SK-N-SH (cell line): ENCODE measurements at regions of chr14 and their contacts with region 1.

Region 1: GRCh38 chr14:94036313-94037050 is 10.3 kb downstream of the OTUB2 start:
- DNase-seq: peak; percentile 80
- H3K4me3 ChIP-seq: no peak overlapping the region
- H3K27ac ChIP-seq: no peak overlapping the region
- H3K4me1 ChIP-seq: peaks cover 0 to 14% of the 10 kb centered on the region in 2 experiments; a peak in 1 of 4 replicates
- H3K27me3 ChIP-seq: no peaks in the 10 kb centered on the region
- CTCF ChIP-seq: peak; percentile 78
- EP300 ChIP-seq: no peak
- RAD21 ChIP-seq: peak; percentile 74

Region 2: DNA sequence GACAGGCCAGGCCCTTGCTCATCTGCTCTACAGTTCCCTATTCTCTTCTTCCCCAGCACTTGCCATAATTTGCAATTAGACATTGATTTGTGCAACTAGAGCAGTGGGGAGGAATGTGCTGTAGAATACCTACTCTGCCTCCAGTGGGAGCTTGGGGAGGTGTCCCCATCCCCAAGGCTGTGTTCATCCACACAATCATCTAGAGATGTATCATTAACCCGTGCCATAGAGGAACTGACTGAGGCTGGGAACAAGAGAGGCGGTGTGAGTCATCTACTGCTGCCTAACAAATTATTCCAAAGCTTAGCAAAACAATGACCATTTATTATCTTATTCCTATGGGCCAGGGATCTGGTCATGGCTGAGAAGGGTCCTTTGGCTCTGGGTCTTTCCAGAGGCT is 15.5 kb before region 1 on chr14:
- CTCF ChIA-PET with region 1: interaction called, 12 read pairs
- POLR2A ChIA-PET with region 1: no interaction called
- DNase-seq: no peak
- H3K4me3 ChIP-seq: no peak overlapping the region
- H3K27ac ChIP-seq: no peak overlapping the region
- H3K4me1 ChIP-seq: no peaks in the 10 kb centered on the region
- H3K27me3 ChIP-seq: no peaks in the 10 kb centered on the region
- CTCF ChIP-seq: no peak
- EP300 ChIP-seq: no peak
- RAD21 ChIP-seq: no peak

Region 3: DNA sequence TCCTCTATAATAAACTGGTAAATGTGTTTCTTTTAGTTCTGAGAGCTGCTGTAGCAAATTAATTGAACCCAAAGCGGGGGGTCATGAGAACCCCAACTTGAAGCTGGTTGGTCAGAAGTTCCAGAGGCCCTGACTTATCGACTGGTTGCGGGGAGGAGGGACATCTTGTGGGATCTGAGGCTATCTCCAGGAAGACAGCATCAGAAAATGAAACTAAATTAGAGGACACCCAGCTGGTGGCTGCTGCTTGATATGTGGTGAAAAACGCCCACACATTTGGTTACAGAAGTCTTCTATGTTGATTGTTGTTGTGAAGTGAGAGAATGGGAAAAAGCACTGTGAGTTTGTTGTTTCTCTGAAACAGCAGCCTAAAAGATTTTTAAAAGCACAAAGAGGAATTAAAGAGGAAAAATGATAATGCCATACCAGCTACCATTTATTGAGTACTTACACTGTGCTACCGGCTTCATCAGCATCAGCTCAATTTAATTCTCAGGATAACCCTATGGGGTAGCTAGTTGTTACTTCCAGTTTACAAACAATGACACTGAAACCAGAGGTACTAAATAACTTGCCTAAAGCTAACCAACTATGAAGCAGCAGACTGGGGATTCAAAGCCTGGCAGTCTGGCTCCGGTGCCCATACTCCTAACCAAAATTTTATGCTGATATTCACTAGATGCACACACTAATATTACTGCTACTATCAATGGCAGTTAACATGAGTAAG is 20.3 kb after region 1 on chr14:
- CTCF ChIA-PET with region 1: interaction called, 74 read pairs
- POLR2A ChIA-PET with region 1: no interaction called
- DNase-seq: no peak
- H3K4me3 ChIP-seq: no peak overlapping the region
- H3K27ac ChIP-seq: no peak overlapping the region
- H3K4me1 ChIP-seq: no peaks in the 10 kb centered on the region; a peak in 1 of 4 replicates
- H3K27me3 ChIP-seq: no peaks in the 10 kb centered on the region
- CTCF ChIP-seq: no peak
- EP300 ChIP-seq: no peak
- RAD21 ChIP-seq: no peak

Region 4: GRCh38 chr14:94143239-94143638 is 106.8 kb after region 1 on chr14:
- CTCF ChIA-PET with region 1: interaction called, 132 read pairs
- POLR2A ChIA-PET with region 1: no interaction called
- DNase-seq: no peak
- H3K4me3 ChIP-seq: no peak overlapping the region
- H3K27ac ChIP-seq: no peak overlapping the region
- H3K4me1 ChIP-seq: no peaks in the 10 kb centered on the region
- H3K27me3 ChIP-seq: no peaks in the 10 kb centered on the region
- CTCF ChIP-seq: peak; percentile 35; the same call in 1 of the 2 replicates
- EP300 ChIP-seq: no peak
- RAD21 ChIP-seq: peak; percentile 37

Region 5: GRCh38 chr14:94180655-94181271 is 144.3 kb after region 1 on chr14:
- CTCF ChIA-PET with region 1: interaction called, 24 read pairs
- POLR2A ChIA-PET with region 1: no interaction called
- DNase-seq: peak; percentile 38
- H3K4me3 ChIP-seq: peak overlapping the region; percentile 21 to 38; a peak in 2 of 4 replicates
- H3K27ac ChIP-seq: peak overlapping the region in 1 of 2 experiments; percentile 34; a peak in 1 of 4 replicates
- H3K4me1 ChIP-seq: peaks cover 0 to 3% of the 10 kb centered on the region in 2 experiments; a peak in 2 of 4 replicates
- H3K27me3 ChIP-seq: no peaks in the 10 kb centered on the region
- CTCF ChIP-seq: peak; percentile 77
- EP300 ChIP-seq: no peak
- RAD21 ChIP-seq: peak; percentile 71

Region 6: DNA sequence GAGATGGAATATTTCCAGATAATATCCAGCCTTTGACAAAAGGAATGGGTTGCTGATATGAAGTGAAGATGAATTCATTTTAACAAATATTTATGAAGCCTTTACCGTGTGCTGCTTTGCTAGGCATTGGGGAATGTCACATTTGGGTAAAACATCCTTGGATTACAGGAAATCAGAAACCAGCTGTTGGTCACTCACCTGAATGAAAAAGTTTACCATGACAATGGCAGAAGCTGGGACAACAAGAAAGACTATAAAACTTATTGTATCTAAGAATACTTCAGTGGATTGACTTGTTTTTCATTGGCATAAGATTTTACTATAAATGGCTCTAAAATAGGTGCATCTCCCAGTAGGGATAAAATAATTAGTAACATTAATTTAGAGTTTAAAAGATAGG is 157.3 kb after region 1 on chr14:
- CTCF ChIA-PET with region 1: no interaction called
- POLR2A ChIA-PET with region 1: no interaction called
- DNase-seq: no peak
- H3K4me3 ChIP-seq: no peak overlapping the region
- H3K27ac ChIP-seq: no peak overlapping the region
- H3K4me1 ChIP-seq: no peaks in the 10 kb centered on the region; a peak in 1 of 4 replicates
- H3K27me3 ChIP-seq: no peaks in the 10 kb centered on the region
- CTCF ChIP-seq: no peak
- EP300 ChIP-seq: no peak
- RAD21 ChIP-seq: no peak

Region 7: DNA sequence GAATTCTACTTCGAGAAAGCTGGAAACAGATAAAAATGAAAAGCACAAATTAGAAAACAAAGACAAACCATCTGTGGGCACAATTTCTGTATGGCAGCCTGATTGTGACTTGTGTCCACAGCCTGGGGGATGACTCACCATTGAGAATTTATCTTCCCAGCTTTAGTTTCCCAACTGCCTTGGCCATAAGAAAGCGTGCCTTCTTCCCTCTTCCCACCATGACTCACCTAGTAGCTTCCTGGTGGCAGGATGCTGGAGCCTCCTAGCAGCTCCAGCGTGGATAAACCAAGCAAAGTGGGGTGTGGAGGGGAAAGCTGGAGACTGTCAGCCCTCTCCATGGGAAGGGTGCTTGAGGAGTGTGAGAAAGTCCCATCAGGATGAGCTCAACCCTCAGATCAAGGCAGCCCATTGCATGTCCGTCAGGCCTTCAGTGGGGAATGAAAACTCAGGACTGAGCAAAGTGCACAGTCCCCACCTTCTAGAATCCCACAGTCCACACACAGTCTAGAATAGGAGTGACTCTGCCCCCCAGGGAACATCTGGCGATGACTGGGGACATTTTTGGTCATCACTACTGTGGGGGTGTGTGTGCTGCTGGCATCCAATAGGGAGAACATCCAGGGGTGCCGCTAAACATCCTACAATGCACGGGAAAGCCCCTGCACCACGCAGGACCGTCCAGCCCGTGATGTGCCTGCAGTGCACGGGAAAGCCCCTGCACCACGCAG is 309.0 kb after region 1 on chr14:
- CTCF ChIA-PET with region 1: no interaction called
- POLR2A ChIA-PET with region 1: no interaction called
- DNase-seq: no peak
- H3K4me3 ChIP-seq: no peak overlapping the region
- H3K27ac ChIP-seq: peak overlapping the region in 1 of 2 experiments; percentile 91; a peak in 2 of 4 replicates
- H3K4me1 ChIP-seq: peaks cover 0 to 21% of the 10 kb centered on the region in 2 experiments; a peak in 3 of 4 replicates
- H3K27me3 ChIP-seq: no peaks in the 10 kb centered on the region
- CTCF ChIP-seq: no peak
- EP300 ChIP-seq: peak in 1 of 2 experiments; percentile 75; a peak in 2 of 4 replicates
- RAD21 ChIP-seq: no peak